CD4-positive, alpha-beta memory T cell (primary cell): ENCODE measurements at regions of chr10 and their contacts with region 1.

Region 1: DNA sequence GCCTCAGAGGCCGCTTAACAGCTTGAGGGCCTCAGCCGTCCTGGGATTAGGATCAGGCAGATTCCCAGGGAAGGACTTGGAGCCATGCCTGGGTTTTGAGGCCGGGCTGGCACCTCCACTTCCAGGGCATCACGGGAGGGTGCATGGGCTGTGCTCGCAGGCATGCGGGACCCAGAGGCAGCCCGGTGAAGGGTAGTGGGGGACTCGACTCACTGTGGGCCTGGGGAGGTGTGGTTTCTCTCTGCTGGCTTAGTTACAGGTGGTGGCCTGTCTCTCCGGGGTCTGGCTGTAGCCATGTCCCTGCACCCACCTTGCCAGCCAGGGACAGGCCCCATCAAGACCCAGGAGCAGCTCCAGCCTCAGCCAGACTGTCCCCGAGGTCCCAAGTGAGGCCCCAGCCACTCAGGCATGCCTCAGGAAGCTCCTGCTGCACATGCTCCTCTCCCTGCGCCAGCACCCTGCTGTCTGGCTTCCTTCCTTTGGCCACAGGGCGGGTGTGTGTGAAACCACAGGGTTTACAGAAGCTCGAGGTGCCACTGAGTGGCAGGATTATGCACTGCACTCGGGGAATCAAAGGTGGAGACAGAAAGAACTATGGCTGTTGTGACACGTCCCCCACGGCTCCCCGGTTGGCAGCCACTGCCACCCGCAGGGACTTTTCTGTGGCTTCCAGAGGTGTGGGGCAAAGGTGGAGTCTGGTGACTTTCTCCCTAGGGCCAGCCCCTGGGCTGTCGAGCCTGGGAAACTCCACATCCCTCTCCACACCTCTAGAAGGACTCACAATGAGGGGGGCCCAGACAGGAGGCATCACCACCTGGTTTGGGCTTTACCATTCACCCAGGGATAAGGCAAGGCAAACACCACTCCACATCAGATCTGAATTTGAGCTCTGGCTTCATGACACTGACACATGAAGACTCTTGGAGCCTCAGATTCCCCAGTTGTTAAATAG is 19.7 kb downstream of the GOLGA7B start:
- DNase-seq: peak; percentile 82 to 87 (median 83)
- H3K4me3 ChIP-seq: no peak overlapping the region
- H3K4me3 Mint-ChIP-seq: peak overlapping the region in 4 of 8 donors; percentile 4 to 64 (median 41)
- H3K27ac ChIP-seq: no peak overlapping the region
- H3K27ac Mint-ChIP-seq: peak overlapping the region; percentile 55 to 87 (median 71)
- H3K4me1 ChIP-seq: peaks cover 16% of the 10 kb centered on the region
- H3K4me1 Mint-ChIP-seq: peaks cover 6 to 14% (median 12%) of the 10 kb centered on the region in 4 donors
- H3K27me3 ChIP-seq: no peaks in the 10 kb centered on the region
- H3K27me3 Mint-ChIP-seq: no peaks in the 10 kb centered on the region

Region 2: GRCh38 chr10:97714048-97714371 is 155.4 kb before region 1 on chr10:
- CTCF ChIA-PET with region 1: interaction called, 7 read pairs
- POLR2A ChIA-PET with region 1: no interaction called
- intact Hi-C with region 1: loop called (anchors 1 kb)
- DNase-seq: peak; percentile 50 to 69 (median 54)
- H3K4me3 ChIP-seq: peak overlapping the region; percentile 30 to 55
- H3K4me3 Mint-ChIP-seq: peak overlapping the region; percentile 98 to 100 (median 99)
- H3K27ac ChIP-seq: no peak overlapping the region
- H3K27ac Mint-ChIP-seq: peak overlapping the region; percentile 37 to 96 (median 92)
- H3K4me1 ChIP-seq: peaks cover 6% of the 10 kb centered on the region
- H3K4me1 Mint-ChIP-seq: peaks cover 7 to 22% (median 14%) of the 10 kb centered on the region in 4 donors
- H3K27me3 ChIP-seq: no peaks in the 10 kb centered on the region
- H3K27me3 Mint-ChIP-seq: peaks cover 7 to 9% of the 10 kb centered on the region in 2 donors

Region 3: GRCh38 chr10:97726636-97727178 is 142.7 kb before region 1 on chr10:
- CTCF ChIA-PET with region 1: no interaction called
- POLR2A ChIA-PET with region 1: no interaction called
- intact Hi-C with region 1: no loop called
- DNase-seq: peak in 1 of 5 donors; percentile 3
- H3K4me3 ChIP-seq: no peak overlapping the region
- H3K4me3 Mint-ChIP-seq: no peak overlapping the region
- H3K27ac ChIP-seq: no peak overlapping the region
- H3K27ac Mint-ChIP-seq: no peak overlapping the region
- H3K4me1 ChIP-seq: no peaks in the 10 kb centered on the region
- H3K4me1 Mint-ChIP-seq: no peaks in the 10 kb centered on the region
- H3K27me3 ChIP-seq: no peaks in the 10 kb centered on the region
- H3K27me3 Mint-ChIP-seq: peaks cover 8% of the 10 kb centered on the region in 2 donors

Region 4: DNA sequence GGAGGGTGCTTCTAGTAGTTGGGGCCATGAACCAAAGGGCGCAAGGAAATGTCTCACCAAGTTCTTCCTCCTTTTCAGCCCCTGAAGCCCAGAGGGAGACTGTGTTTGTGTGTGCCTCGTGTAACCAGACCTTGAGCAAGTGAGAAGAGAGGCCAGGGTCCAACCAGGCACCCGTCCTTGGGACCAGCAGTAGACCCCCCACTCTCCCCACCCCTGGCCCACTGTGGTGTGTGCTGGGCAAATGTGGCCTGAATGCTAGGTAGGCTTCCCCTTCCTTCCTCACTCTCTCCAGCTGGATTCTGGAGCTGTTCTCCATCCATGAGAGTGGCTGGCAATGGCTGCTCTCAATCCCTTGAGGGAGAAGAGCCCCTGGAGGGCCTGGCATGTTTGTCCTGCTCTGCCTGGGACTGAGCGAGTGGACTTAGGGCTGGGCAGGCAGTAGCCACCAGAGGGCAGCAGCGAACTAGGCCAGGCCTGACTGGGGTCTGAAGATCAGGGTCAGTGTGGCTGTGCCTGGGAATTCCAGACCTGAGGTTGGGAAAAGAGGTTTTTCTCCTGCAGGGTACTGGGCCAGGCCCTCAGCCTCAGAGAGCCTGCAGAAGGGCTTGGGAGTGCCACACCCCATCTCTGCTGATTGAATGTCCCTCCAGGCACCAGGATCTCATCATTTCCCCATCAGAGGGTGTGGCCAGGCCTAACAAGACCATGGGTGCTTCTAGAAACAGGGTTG is 110.0 kb before region 1 on chr10:
- CTCF ChIA-PET with region 1: interaction called, 17 read pairs
- POLR2A ChIA-PET with region 1: no interaction called
- intact Hi-C with region 1: loop called (anchors 1 kb)
- DNase-seq: peak in 4 of 5 donors; percentile 18 to 37 (median 28)
- H3K4me3 ChIP-seq: no peak overlapping the region
- H3K4me3 Mint-ChIP-seq: no peak overlapping the region
- H3K27ac ChIP-seq: no peak overlapping the region
- H3K27ac Mint-ChIP-seq: no peak overlapping the region
- H3K4me1 ChIP-seq: no peaks in the 10 kb centered on the region
- H3K4me1 Mint-ChIP-seq: no peaks in the 10 kb centered on the region
- H3K27me3 ChIP-seq: no peaks in the 10 kb centered on the region
- H3K27me3 Mint-ChIP-seq: no peaks in the 10 kb centered on the region

Region 5: GRCh38 chr10:97843281-97843671 is 26.1 kb before region 1 on chr10:
- CTCF ChIA-PET with region 1: interaction called, 10 read pairs
- POLR2A ChIA-PET with region 1: no interaction called
- intact Hi-C with region 1: no loop called
- DNase-seq: no peak
- H3K4me3 ChIP-seq: no peak overlapping the region
- H3K4me3 Mint-ChIP-seq: no peak overlapping the region
- H3K27ac ChIP-seq: no peak overlapping the region
- H3K27ac Mint-ChIP-seq: no peak overlapping the region
- H3K4me1 ChIP-seq: no peaks in the 10 kb centered on the region
- H3K4me1 Mint-ChIP-seq: peaks cover 10 to 21% (median 16%) of the 10 kb centered on the region in 4 donors
- H3K27me3 ChIP-seq: no peaks in the 10 kb centered on the region
- H3K27me3 Mint-ChIP-seq: no peaks in the 10 kb centered on the region

Region 6: GRCh38 chr10:98694014-98694413 is 824.6 kb after region 1 on chr10:
- CTCF ChIA-PET with region 1: no interaction called
- POLR2A ChIA-PET with region 1: no interaction called
- intact Hi-C with region 1: no loop called
- DNase-seq: no peak
- H3K4me3 ChIP-seq: no peak overlapping the region
- H3K4me3 Mint-ChIP-seq: no peak overlapping the region
- H3K27ac ChIP-seq: no peak overlapping the region
- H3K27ac Mint-ChIP-seq: no peak overlapping the region
- H3K4me1 ChIP-seq: no peaks in the 10 kb centered on the region
- H3K4me1 Mint-ChIP-seq: peaks cover 0 to 5% (median 0%) of the 10 kb centered on the region in 4 donors
- H3K27me3 ChIP-seq: no peaks in the 10 kb centered on the region
- H3K27me3 Mint-ChIP-seq: peaks cover 4 to 5% of the 10 kb centered on the region in 2 donors

Region 7: DNA sequence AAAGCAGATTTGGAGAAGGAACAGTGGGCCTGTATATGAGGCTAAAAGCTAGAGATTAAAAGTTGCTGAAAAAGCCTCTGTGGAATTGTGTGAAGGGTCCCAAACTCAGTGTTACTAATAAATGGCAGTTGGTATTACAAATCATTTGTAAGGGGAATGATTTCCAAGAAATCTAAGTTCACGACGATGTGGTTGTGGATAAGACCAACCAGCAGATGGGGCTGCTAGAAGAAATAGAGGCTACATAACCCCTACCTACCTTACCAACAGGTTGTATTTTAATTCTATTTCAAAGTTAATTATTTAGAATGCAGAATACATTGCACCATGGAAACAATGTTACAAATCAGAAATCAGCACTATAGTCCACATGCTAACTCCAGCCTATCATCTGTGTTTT is 989.2 kb after region 1 on chr10:
- CTCF ChIA-PET with region 1: no interaction called
- POLR2A ChIA-PET with region 1: no interaction called
- intact Hi-C with region 1: no loop called
- DNase-seq: no peak
- H3K4me3 ChIP-seq: no peak overlapping the region
- H3K4me3 Mint-ChIP-seq: no peak overlapping the region
- H3K27ac ChIP-seq: no peak overlapping the region
- H3K27ac Mint-ChIP-seq: no peak overlapping the region
- H3K4me1 ChIP-seq: no peaks in the 10 kb centered on the region
- H3K4me1 Mint-ChIP-seq: no peaks in the 10 kb centered on the region
- H3K27me3 ChIP-seq: no peaks in the 10 kb centered on the region
- H3K27me3 Mint-ChIP-seq: no peaks in the 10 kb centered on the region